Common myeloid progenitor, CD34-positive (primary cell): ENCODE measurements at regions of chr2 and their contacts with region 1.

Region 1: DNA sequence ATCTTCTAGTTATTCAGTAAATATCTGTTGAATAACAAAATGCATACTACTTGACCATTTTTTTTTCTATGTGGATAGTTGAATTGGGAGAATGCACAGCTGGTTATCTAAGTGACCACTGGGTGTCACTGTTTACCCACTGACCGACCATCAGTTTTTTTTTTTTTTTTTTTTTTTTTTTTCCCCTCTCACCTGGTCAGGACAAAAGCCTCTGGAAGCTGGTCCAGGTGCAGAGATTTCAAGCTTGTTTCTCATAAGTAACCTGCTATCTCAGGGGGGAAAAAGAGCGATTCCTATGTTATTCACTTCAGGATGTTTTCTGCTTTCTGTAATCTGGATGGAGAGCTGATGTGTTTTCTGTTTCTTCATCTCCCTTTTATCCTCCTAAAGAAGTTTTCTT is 256.0 kb downstream of the DCDC2C start:
- DNase-seq: peak; percentile 17 to 48 (median 33)
- H3K4me3 ChIP-seq: no peak overlapping the region
- H3K27ac ChIP-seq: no peak overlapping the region
- H3K4me1 ChIP-seq: no peaks in the 10 kb centered on the region
- H3K27me3 ChIP-seq: peaks cover 0 to 7% (median 3%) of the 10 kb centered on the region in 5 experiments

Region 2: DNA sequence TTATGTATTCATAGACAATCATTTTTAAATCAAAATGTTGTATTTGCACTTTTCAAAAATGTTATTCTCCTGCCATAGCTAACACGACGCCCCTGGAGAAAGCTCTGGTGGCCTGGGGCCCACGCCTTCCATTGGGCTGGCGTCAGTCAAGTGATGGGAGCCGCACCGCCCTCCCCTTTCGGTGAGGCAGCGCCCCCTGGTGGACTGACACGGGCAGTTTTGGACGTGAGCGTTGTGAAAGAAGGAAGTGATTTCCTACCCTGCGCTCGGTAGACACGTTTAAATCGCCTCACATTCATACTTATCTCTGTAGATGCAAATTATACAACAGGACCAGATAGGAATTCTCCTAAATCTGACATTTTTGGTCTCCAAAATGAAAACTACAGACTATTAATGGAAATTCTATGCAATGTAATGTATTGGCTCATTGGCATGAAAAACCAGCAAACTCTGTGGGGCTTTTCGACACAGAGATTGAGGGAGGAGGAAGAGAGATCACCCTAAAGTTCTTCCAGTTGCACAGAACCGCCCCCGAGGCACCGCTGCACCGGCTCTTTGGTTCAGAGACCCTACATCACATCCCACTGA is 1406.6 kb after region 1 on chr2:
- CTCF ChIA-PET with region 1: interaction called, 12 read pairs
- POLR2A ChIA-PET with region 1: no interaction called
- DNase-seq: peak; percentile 54 to 72 (median 64)
- H3K4me3 ChIP-seq: peak overlapping the region in 1 of 7 experiments; percentile 2
- H3K27ac ChIP-seq: no peak overlapping the region
- H3K4me1 ChIP-seq: no peaks in the 10 kb centered on the region
- H3K27me3 ChIP-seq: peaks cover 0 to 2% (median 0%) of the 10 kb centered on the region in 5 experiments